ENCODE measurements at regions of chr12 and their contacts with region 1.

Region 1: GRCh38 chr12:50174971-50175715 is 8.0 kb upstream of the CERS5 start:
- H3K4me3 ChIP-seq: no peak overlapping the region
- H3K27ac ChIP-seq: no peak overlapping the region
- H3K4me1 ChIP-seq: no peaks in the 10 kb centered on the region
- CTCF ChIP-seq: peak; percentile 31; the same call in 1 of the 2 replicates

Region 2: DNA sequence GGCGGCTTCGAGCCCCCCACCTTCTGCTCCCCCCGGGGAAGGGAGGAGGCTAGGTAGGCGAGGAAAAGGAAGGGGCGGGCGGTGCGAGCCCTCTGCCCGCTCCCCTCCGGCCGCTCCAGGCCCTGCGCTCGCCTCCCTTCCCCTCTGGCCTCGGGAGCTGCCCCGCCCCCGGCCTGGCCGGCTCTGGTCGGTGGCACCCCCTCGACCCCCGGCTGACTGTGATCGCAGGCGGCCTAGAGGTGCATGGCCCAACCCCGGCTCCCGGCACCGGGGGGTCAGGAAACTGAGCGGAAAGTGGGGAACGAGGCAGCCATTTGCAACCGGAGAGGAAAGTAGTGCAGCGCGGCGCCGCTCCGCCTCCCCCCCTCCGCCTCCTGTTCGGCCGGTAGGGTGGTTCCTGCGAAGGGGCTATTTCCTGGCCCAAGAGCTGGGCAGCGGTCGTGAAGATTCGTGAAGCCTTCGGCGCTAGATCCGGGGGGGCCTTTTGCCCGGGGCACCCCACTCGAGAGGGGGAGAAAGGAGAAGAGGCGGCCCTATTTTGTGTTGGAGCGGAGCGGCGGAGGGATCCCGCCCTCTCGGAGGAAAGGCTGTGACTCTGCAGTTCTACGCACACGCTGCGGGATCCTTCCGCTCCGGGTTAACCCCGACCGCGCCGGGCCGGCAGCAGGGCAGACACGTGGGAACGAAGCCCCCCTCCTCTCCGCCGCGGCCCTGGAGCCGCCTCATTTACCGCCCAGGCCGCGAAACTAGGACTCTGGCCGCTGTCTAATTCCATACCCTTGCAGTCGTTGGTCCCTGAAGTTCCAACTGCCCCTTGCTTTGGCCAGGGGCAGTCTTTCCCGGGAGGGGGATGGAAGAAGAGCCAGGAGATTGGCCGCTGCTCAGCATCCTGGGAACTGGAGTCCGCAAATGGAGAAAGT is 1114.6 kb before region 1 on chr12 and contains the start of gene KMT2D:
- CTCF ChIA-PET with region 1: no interaction called
- POLR2A ChIA-PET with region 1: no interaction called
- H3K4me3 ChIP-seq: peak within 1 kb of the TSS; percentile 95
- H3K27ac ChIP-seq: peak within 1 kb of the TSS; percentile 93
- H3K4me1 ChIP-seq: peaks cover 11% of the 10 kb centered on the region
- CTCF ChIP-seq: peak; percentile 94

Region 3: DNA sequence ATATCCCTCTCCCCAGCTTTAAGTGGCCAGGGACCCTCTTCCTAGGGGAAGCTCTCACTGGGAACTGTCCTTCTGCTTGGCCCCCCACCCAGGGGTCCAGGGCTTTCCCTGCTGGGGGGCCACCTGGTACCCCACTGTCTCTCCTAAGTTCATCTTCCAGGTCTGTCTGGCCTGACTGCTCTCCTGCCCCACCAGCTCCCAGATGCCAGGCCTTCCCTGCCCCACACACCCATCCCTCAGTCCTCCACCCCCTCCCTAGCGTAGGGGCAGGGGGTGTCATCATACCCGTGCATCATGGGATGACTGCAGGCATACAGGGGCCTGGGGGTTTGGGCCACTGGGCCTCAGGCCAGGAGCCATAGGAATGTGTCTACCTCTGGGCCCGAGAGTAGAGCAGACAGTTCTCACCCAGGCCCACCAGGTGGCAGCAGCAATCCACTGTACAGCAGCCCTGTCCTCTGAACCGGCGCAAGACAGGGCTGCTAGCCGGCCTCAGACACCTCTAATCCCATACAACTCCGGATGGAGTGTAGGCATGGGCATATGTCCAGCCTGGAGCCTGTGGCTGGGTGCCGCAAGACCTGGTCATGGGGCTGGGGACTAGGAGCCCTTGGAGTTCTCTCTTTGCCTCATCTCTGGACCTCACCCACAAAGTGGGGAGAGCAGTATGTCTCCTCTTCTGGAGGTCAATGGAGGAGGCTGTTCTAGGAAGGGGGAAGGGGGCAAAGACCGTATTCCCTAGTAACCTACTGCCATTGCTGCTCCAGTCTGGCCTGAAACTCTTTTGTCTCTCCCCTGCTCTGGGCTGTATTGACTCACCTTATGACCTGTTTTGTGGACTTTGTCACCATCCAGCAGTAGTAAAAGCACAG is 100.0 kb before region 1 on chr12:
- CTCF ChIA-PET with region 1: interaction called, 35 read pairs
- POLR2A ChIA-PET with region 1: no interaction called
- H3K4me3 ChIP-seq: no peak overlapping the region
- H3K27ac ChIP-seq: no peak overlapping the region
- H3K4me1 ChIP-seq: no peaks in the 10 kb centered on the region
- CTCF ChIP-seq: peak; percentile 95

Region 4: DNA sequence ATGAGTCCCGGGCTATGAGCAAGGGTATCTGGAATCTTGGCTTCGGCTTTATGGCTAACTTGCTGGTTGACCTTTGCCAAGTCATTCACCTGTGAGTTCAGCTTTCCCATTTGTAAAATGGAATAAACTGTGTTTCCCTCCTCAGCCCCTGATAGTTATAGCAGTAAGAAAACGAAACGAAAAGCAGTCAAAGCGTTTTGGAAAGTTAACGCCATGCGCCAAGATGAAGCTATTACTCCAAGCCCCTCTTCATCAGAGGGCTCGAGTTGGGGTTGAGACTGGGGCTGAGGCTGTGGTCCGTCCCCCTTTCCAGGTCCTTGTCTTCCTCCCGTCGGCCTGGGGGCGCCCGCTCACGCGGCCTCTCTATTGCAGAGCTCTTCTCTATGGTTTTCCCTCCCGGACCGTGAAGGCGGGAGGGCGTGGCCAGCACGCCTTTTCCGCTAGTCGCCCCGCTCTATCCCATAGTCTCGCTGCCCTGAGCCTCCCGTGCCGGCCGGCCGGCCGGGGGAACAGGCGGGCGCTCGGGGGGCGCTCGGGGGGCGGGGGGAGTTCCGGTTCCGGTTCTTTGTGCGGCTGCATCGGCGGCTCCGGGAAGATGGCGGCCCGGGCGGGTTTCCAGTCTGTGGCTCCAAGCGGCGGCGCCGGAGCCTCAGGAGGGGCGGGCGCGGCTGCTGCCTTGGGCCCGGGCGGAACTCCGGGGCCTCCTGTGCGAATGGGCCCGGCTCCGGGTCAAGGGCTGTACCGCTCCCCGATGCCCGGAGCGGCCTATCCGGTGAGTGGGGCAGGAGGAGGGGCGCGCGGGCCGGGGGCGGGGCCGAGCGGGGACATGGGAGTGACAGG is 90.1 kb before region 1 on chr12 and contains the start of gene SMARCD1:
- CTCF ChIA-PET with region 1: interaction called, 11 read pairs
- POLR2A ChIA-PET with region 1: interaction called, 3 read pairs
- H3K4me3 ChIP-seq: peak within 1 kb of the TSS; percentile 75
- H3K27ac ChIP-seq: peak within 1 kb of the TSS; percentile 69
- H3K4me1 ChIP-seq: no peaks in the 10 kb centered on the region
- CTCF ChIP-seq: peak; percentile 65

Region 5: GRCh38 chr12:50127546-50127945 is 47.6 kb before region 1 on chr12:
- CTCF ChIA-PET with region 1: interaction called, 21 read pairs
- POLR2A ChIA-PET with region 1: interaction called, 4 read pairs
- H3K4me3 ChIP-seq: no peak overlapping the region
- H3K27ac ChIP-seq: no peak overlapping the region
- H3K4me1 ChIP-seq: no peaks in the 10 kb centered on the region
- CTCF ChIP-seq: no peak

Region 6: DNA sequence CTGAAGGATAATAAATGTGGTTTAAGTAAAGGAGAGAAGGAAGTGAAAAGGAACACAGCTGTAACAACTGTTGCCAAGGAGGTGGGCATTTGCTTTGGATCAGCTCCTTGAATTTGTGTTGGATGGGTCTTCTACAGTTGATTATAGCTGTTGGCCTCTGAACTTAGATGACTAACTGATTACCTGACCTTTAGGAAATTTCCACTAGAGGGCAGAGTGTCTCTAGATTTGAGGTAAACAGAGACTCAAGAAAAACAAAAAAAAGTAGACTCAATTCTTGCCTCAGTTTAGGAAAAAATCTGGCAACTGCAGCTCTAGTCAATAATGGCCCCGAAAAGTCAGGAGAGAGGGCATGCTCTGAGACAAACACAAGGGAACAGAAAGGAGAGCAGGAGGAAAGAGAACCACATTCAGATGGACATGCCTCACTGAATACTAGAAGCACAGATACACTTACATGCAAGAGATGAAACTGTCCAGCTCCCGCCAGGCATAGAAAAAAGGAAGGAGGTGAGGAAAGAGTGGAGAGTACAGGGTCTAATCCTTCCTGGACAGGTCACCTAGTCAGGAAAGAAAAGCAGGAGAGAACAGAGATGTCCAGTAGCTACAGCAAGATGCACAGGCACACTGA is 42.5 kb before region 1 on chr12:
- CTCF ChIA-PET with region 1: interaction called, 21 read pairs
- POLR2A ChIA-PET with region 1: interaction called, 4 read pairs
- H3K4me3 ChIP-seq: no peak overlapping the region
- H3K27ac ChIP-seq: no peak overlapping the region
- H3K4me1 ChIP-seq: no peaks in the 10 kb centered on the region
- CTCF ChIP-seq: peak; percentile 27; the same call in 1 of the 2 replicates

Region 7: DNA sequence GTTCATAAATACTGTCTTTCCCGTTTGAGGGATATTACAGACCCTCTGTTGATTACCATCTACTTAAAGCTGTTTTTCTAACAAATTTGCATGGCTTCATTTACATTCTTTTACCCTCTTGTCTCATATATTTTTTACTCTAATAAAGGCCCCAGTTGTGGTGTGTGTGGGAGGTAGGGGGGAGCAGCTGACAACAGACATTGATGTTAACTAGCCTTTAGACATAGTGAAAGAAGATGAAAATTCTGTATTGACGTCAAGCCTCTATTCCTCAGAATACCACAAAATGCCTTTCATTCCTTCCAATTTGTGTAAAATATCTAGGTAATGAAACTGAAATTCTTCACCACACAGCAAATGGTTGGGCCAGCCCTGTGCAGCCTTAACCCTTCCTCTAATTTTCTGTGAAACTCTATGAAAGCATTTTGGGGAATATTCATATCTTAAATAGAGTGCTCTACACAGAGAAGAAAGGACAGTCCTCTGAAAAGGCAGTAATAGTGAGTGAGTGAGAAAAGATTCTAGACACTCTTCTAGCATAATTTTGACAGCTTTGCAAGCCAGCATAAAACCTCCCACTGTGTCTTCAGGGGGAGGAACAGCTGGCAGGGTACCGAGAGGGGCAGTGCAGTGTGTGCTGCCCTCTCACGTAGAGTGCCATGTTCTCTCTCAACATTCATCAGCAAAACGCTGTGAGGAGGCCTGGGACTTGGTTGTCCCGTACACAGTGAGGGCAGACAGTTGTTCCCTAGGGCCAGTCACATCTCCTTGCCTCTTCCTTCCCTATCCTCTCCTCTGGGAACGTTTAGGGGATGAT is 12.1 kb after region 1 on chr12:
- CTCF ChIA-PET with region 1: interaction called, 21 read pairs
- POLR2A ChIA-PET with region 1: no interaction called
- H3K4me3 ChIP-seq: no peak overlapping the region
- H3K27ac ChIP-seq: no peak overlapping the region
- H3K4me1 ChIP-seq: 0 out of 2 replicates have a peak, but pooled peaks cover 2% of the 10 kb centered on the region
- CTCF ChIP-seq: no peak

Measured in HEK293 (cell line).